MCF 10A (cell line): ENCODE measurements at regions of chr11 and their contacts with region 1.

Region 1: DNA sequence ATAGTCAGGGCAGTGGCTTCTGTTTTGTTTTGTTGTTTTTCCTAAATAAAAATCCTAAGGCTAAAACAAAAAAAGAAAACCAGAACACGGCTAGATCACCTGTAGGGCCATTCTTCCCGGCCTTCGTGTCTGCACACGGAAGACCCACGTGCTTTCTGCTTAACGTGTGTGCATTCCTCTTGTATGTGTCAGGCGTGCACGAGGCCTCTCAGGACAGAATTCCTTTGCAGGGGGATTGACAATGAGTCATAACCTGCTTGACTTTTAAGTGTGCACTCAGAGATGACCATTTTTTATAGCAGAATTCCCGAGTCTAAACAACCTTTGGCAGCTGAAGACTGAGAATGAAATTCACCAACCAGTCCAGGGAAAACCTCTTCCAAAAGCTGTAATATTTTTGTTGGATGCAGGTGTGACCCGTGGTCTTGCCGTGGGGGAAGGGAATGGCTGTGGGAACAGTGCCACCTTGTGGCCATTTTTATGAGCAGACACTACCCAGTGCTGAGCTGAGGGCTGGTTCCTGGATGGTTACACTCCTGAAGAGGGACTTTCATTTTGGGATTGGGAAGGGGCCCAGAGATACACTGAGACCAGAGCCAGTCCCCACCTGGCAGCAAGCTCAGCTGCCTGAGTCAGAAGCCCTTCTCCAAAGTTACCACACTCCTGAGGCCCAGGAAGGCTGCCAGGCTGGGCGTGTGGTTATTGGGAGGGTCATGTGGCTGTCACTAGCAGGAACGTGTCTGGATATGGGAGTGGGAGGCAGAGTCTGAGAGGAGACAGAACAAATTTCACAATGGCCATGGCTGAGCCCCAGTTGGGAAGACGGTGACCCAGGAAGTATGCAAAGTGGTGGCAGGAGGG is 35.8 kb upstream of the DKK3 start:
- DNase-seq: peak; percentile 94
- H3K4me3 Mint-ChIP-seq: peak overlapping the region; percentile 21
- H3K27ac Mint-ChIP-seq: peak overlapping the region; percentile 29
- H3K4me1 Mint-ChIP-seq: peaks cover 45% of the 10 kb centered on the region
- H3K27me3 Mint-ChIP-seq: no peaks in the 10 kb centered on the region
- CTCF ChIP-seq: peak; percentile 94

Region 2: DNA sequence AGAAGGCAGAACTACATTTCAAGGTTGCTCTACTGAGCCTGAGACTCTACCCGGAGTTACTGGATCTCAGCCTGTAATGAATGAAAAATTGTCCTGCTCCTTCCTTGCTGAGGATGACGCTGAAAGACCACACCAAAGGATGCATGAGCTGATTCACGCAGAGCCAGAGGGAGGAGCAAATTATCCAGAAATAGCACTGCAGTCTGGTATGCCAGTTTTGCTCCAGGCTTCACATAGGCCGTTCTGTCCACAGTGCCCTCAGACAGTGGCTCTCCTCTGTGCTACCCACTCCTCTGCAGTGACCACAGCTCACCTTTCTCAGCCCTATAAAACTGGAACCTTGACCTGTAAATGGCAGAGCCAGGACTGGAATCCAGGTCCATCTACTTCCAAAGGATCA is 343.1 kb before region 1 on chr11:
- CTCF ChIA-PET with region 1: no interaction called
- POLR2A ChIA-PET with region 1: interaction called, 3 read pairs
- intact Hi-C with region 1: loop called (anchors 5 kb)
- DNase-seq: peak; percentile 60
- H3K4me3 Mint-ChIP-seq: no peak overlapping the region
- H3K27ac Mint-ChIP-seq: peak overlapping the region; percentile 44
- H3K4me1 Mint-ChIP-seq: peaks cover 7% of the 10 kb centered on the region
- H3K27me3 Mint-ChIP-seq: no peaks in the 10 kb centered on the region
- CTCF ChIP-seq: peak; percentile 33

Region 3: DNA sequence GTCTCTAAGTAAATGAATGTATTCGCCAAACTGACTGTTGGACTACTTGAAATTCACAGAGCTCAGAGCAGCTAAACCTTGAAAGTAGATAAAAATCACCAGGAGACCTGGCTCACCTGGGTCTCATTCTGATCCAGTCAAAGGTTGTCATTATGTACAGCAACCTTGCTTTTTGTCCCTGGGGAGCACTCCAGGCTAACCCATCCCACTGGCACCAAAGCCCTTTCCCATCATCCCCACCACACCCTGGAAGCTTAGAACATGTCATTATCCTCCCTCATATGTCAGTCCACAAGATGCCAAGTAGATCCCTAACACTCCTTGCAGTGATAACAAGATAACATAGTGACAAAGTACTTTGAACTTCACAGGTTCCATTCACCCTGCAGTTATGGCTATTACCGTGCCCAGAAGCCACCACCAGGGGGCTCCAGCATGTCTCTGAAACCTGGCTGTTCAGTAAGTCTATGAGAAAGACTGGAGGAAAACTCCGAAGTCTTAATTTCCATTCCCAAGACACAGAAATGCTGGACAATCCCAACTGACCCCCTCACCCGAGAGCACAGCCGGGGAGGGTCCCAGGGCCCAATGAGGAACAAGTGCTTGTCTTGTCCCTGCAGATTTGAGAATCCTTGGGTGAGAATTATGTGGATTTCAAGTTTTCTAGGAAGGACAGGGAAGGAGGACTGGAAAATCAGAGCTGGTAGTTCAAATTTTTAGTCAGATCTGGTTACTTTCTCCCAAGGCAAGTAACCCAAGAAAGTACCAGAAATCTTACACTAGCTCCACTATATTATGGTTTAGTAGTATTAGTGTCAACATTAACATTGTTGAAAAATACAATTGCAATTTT is 245.4 kb before region 1 on chr11:
- CTCF ChIA-PET with region 1: interaction called, 11 read pairs
- POLR2A ChIA-PET with region 1: interaction called, 6 read pairs
- intact Hi-C with region 1: loop called (anchors 1 kb)
- DNase-seq: peak; percentile 83
- H3K4me3 Mint-ChIP-seq: no peak overlapping the region
- H3K27ac Mint-ChIP-seq: no peak overlapping the region
- H3K4me1 Mint-ChIP-seq: no peaks in the 10 kb centered on the region
- H3K27me3 Mint-ChIP-seq: peaks cover 28% of the 10 kb centered on the region
- CTCF ChIP-seq: peak; percentile 79

Region 4: GRCh38 chr11:11910541-11910940 is 133.6 kb before region 1 on chr11:
- CTCF ChIA-PET with region 1: no interaction called
- POLR2A ChIA-PET with region 1: no interaction called
- intact Hi-C with region 1: no loop called
- DNase-seq: no peak
- H3K4me3 Mint-ChIP-seq: no peak overlapping the region
- H3K27ac Mint-ChIP-seq: no peak overlapping the region
- H3K4me1 Mint-ChIP-seq: peaks cover 9% of the 10 kb centered on the region
- H3K27me3 Mint-ChIP-seq: no peaks in the 10 kb centered on the region
- CTCF ChIP-seq: no peak

Region 5: DNA sequence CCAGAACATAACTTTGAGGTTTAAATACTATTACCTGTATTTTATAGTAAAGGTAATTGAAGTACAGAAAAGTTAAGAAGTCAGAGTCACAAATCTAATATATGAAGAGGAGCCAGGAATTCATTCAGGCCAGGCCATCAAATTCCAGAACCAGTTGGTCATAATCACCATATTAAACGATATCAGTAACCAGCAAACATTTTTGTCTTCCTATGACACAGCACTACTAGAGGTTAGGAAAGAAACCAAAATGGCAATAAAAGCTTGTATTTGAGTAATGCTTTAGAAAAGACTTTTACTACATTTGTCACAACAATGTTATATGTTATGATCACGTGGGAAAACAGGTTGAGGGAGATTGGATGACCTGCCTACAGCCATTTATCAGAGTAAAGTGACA is 98.0 kb before region 1 on chr11:
- CTCF ChIA-PET with region 1: interaction called, 12 read pairs
- POLR2A ChIA-PET with region 1: interaction called, 6 read pairs
- intact Hi-C with region 1: no loop called
- DNase-seq: no peak
- H3K4me3 Mint-ChIP-seq: no peak overlapping the region
- H3K27ac Mint-ChIP-seq: no peak overlapping the region
- H3K4me1 Mint-ChIP-seq: no peaks in the 10 kb centered on the region
- H3K27me3 Mint-ChIP-seq: no peaks in the 10 kb centered on the region
- CTCF ChIP-seq: no peak

Region 6: DNA sequence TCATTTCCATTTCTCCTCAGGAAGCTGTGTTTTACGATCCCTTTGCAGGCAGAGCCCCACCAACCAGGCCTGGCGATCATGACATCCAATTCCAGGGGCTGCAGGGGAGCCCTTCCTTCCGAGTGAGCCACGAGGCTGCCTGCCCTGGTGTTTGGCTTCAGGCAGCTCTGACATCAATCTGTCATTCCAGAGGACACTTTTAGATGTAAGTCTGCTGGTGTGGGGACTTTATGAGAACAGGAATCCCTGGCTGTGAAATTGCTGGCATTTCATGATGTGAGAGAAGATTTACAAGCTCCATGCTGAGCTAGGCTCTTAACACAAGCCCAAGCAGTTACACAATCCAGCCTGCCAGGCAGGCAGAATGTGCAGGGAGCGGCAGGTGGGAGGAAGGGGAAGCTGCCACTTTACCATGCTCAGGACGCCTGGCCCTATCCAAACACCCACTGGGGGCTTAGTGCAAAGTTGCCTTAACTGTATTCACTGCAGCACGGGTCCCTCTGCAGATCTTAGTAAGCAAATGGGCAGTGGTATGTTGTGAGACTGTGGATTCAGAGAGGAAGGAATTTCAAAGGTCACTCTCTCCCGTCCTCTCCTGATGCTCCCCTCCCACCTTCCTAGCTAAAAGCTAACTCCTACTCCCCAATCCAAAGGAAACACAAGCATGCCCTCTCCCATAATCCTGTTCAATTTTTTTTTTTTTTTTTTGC is 22.8 kb after region 1 on chr11:
- CTCF ChIA-PET with region 1: interaction called, 51 read pairs
- POLR2A ChIA-PET with region 1: interaction called, 5 read pairs
- intact Hi-C with region 1: no loop called
- DNase-seq: peak; percentile 82
- H3K4me3 Mint-ChIP-seq: peak overlapping the region; percentile 49
- H3K27ac Mint-ChIP-seq: peak overlapping the region; percentile 95
- H3K4me1 Mint-ChIP-seq: peaks cover 53% of the 10 kb centered on the region
- H3K27me3 Mint-ChIP-seq: no peaks in the 10 kb centered on the region
- CTCF ChIP-seq: no peak

Region 7: GRCh38 chr11:12110201-12110713 is 66.1 kb after region 1 on chr11 and contains the start of gene MICAL2:
- CTCF ChIA-PET with region 1: interaction called, 11 read pairs
- POLR2A ChIA-PET with region 1: interaction called, 3 read pairs
- intact Hi-C with region 1: loop called (anchors 2 kb)
- DNase-seq: peak; percentile 88
- H3K4me3 Mint-ChIP-seq: peak within 1 kb of the TSS; percentile 79
- H3K27ac Mint-ChIP-seq: peak within 1 kb of the TSS; percentile 61
- H3K4me1 Mint-ChIP-seq: peaks cover 29% of the 10 kb centered on the region
- H3K27me3 Mint-ChIP-seq: no peaks in the 10 kb centered on the region
- CTCF ChIP-seq: no peak
- total RNA-seq, gene MICAL2: 151 and 154 TPM in 2 replicates

Region 8: DNA sequence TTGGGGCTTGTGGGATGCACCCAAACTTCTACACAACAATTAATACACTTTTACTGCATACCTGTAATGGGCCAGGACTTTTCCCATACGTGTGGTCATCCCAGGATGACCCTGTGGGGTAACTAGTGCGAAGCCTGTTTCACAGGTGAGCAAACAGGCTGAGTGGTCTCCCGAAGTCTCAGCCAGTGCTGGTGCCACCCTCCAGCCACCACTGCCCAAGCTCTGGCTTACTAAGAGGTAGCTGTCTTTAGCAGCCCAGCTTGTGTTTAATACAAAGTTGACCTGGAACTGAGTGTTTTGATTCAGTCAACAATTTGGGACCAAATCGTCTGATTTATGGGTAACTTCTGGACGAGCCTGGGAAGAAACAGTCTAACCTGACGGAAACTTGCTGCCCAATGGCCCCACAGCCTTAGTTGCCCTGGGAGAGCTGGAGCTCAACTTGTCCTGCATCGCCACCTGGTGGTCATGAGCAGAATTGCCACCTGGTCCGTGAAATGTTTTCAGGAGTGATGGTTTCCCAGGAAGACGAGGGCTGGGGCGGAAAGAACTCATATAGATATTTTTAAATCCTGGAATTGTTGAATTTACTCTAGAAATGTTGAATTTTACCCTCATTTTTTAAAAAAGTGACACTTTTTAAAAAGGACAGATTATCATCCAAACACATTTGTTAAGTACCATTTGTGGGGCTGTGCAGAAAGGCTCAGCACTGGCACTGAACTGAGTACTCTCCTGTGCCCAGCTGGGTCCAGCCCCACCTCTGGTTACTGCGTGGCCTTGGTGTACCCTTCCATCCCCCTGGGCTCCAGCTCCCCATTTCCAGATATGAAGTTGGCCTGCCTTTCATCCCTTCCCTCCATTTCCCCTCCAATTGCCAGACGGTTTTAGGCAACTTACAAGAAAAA is 237.6 kb after region 1 on chr11:
- CTCF ChIA-PET with region 1: interaction called, 314 read pairs
- POLR2A ChIA-PET with region 1: interaction called, 13 read pairs
- intact Hi-C with region 1: loop called (anchors 1 kb)
- DNase-seq: peak; percentile 83
- H3K4me3 Mint-ChIP-seq: no peak overlapping the region
- H3K27ac Mint-ChIP-seq: no peak overlapping the region
- H3K4me1 Mint-ChIP-seq: peaks cover 31% of the 10 kb centered on the region
- H3K27me3 Mint-ChIP-seq: no peaks in the 10 kb centered on the region
- CTCF ChIP-seq: peak; percentile 95